Aorta (tissue), 5 donors: ENCODE measurements at regions of chr1 and their contacts with region 1.

Region 1: DNA sequence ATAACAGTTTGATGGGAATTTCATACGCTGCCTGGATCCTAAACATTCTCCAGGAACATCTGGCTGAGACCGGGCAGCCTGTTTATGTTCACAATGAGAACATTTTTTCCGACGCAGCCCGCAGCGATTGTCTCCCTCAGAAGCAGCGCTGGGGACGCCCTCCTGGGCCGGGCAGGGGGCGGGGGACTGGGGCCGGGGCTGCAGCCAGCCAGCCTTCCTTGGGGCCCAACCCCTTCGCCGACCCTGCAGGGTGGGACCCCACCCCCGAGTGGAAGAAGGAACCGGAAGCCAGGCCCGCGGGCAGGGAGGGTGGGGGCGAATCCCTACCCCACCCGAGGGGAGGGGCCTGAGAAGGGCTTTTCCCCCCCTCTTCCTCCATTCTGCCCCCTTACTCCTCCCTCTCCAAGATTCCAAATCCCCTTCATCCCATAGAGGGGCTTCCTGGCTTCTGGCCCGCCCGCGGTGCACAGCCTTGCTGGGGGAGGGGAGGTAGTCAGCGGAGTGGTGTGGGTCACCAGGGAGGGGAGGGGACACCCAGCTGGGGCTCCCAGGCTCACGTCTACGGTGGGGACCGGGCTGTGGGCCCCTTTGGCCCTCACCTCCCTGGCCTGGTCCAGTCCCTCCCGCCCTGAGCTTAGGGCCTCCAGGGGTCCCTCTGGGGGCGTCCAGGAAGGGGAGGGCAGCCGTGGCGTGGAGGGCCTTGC is 60.6 kb downstream of the WNT9A start:
- DNase-seq: peak; percentile 68 to 80
- ATAC-seq: peak; percentile 66
- H3K4me3 ChIP-seq: peak overlapping the region in 1 of 2 donors; percentile 10
- H3K27ac ChIP-seq: no peak overlapping the region
- H3K4me1 ChIP-seq: no peaks in the 10 kb centered on the region
- H3K27me3 ChIP-seq: no peaks in the 10 kb centered on the region

Region 2: DNA sequence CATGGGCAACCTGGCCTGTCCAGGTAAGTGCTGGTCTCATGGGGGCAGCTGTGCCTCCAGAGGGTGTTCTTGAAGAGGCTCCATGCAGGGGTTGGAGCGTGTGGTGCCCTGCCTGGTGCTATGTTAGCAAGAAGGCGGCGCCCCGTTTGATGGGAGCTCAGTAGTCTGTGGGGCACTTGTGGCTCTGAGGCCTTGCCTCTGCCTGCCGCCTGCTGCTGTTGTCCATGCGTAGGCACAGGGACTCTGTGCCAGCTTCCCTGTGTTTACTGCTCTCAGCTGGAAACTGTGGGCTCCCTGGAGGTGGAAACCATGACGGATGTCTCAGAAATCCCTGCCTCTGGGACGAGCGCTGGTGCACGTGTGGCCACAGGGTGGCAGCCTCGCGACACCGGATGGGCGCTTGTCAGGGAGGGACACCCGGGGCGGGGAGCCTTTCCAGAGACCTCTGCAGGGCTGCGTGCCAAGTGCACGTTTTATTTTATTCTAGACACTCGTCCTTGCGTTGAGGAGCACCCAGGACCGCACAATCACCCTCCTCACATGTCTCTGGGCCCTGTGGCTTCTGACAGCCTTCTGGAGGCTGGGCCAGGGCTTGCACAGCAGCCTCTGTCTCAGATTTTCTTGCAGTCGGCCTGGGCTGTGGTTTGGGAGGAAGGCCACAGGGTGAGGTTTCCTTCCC is 124.8 kb before region 1 on chr1:
- intact Hi-C with region 1: loop called in 1 of 2 experiments (anchors 10 kb)
- DNase-seq: peak; percentile 84 to 94
- ATAC-seq: peak; percentile 86
- H3K4me3 ChIP-seq: no peak overlapping the region
- H3K27ac ChIP-seq: no peak overlapping the region
- H3K4me1 ChIP-seq: no peaks in the 10 kb centered on the region
- H3K27me3 ChIP-seq: no peaks in the 10 kb centered on the region

Region 3: GRCh38 chr1:228037401-228038386 is 150.5 kb after region 1 on chr1:
- intact Hi-C with region 1: no loop called
- DNase-seq: peak; percentile 44 to 68
- ATAC-seq: no peak
- H3K4me3 ChIP-seq: no peak overlapping the region
- H3K27ac ChIP-seq: no peak overlapping the region
- H3K4me1 ChIP-seq: no peaks in the 10 kb centered on the region
- H3K27me3 ChIP-seq: no peaks in the 10 kb centered on the region